ENCODE measurements at regions of chr6 and their contacts with region 1.

Region 1: GRCh38 chr6:168132531-168133167 is 53.6 kb upstream of the FRMD1 start:
- DNase-seq: peak; percentile 20
- H3K4me3 ChIP-seq: peak overlapping the region; percentile 17; the same call in 1 of the 2 replicates
- H3K27ac ChIP-seq: no peak overlapping the region
- H3K27me3 ChIP-seq: no peaks in the 10 kb centered on the region
- CTCF ChIP-seq: peak; percentile 38; the same call in 1 of the 2 replicates

Region 2: DNA sequence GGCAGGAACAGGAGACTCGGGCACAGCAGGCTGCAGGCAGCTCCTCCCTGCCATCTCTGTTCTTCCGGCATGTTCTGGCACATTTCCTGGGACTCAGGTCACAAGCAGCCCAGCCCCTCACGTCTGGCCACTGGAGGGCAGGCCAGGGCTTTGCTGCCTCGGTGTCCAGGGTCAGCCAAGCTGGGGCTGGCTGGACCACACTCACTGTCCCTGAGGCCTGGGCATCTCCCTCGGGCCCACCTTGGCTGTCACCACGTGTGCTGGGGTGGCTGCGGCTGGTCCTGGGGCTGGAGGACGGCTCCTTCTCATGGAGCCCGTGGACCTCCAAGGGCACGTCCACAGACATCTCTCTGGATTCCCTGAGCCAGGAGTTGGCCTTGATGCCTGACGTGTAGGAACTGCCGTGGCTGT is 72.1 kb before region 1 on chr6:
- CTCF ChIA-PET with region 1: interaction called, 10 read pairs
- POLR2A ChIA-PET with region 1: no interaction called
- DNase-seq: peak; percentile 16
- H3K4me3 ChIP-seq: no peak overlapping the region
- H3K27ac ChIP-seq: no peak overlapping the region
- H3K27me3 ChIP-seq: no peaks in the 10 kb centered on the region
- CTCF ChIP-seq: peak; percentile 57

Region 3: DNA sequence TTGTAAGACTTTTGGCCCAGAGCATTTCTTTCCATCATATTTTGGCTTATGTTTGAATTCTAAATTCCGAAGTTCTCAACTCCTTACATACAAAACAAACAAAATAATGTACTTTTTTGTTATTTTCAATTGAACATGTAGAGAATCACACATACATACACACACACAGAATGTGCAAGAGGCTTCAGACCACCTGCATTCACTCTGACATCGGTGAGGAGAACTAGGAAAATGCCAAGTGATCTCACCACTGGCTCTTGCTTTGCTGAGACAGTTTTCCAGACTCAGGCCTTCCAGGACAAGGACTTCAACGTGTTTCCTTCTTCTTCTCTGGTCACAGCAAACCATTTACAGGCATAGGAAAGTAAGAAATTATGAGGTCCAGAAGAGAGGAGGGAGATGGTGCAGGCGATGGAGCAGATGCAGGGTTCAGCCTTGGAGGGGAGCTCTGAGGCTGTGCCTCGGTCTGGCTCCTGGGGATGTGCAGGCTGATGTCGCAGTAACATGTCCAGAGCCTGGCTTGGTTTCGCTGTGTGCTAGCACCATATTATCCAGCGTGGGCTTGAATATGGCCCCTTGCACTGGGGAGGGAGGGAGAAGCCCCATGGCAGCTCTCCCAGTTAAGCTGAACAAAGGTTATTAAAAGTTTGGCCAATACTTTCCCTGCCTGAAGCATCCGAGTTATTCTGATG is 93.6 kb after region 1 on chr6:
- CTCF ChIA-PET with region 1: no interaction called
- POLR2A ChIA-PET with region 1: no interaction called
- DNase-seq: no peak
- H3K4me3 ChIP-seq: no peak overlapping the region
- H3K27ac ChIP-seq: no peak overlapping the region
- H3K27me3 ChIP-seq: no peaks in the 10 kb centered on the region
- CTCF ChIP-seq: no peak

Region 4: DNA sequence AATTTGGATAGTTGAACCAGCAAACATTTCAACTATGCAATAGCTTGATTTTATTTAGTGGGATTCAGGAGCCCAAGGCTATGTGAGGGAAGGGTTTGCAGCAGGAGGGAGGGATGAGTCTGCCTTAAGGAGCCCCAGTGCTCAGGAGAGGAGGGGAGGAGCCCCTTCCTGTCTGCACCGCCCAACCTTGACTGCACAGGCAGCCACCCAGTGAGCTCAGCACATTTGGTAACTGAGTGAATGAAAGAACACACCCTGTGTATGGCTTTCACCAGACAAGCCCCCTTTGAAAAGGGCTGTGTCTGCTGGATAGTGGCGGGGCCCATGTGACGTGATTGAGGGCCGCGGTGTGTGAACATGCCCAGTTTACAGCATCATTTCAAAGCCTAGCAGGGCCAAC is 169.9 kb after region 1 on chr6:
- CTCF ChIA-PET with region 1: no interaction called
- POLR2A ChIA-PET with region 1: no interaction called
- DNase-seq: no peak
- H3K4me3 ChIP-seq: no peak overlapping the region
- H3K27ac ChIP-seq: no peak overlapping the region
- H3K27me3 ChIP-seq: no peaks in the 10 kb centered on the region
- CTCF ChIP-seq: no peak

Measured in AG04450 (cell line).